ENCODE measurements at regions of chr11 and their contacts with region 1.

Region 1: GRCh38 chr11:60831143-60831500 is 10.8 kb upstream of the CCDC86 start:
- DNase-seq: peak; percentile 83
- H3K4me3 ChIP-seq: no peak overlapping the region
- H3K27ac ChIP-seq: no peak overlapping the region
- H3K4me1 ChIP-seq: peaks cover 21% of the 10 kb centered on the region
- H3K27me3 ChIP-seq: no peaks in the 10 kb centered on the region
- CTCF ChIP-seq: peak; percentile 89 to 90
- POLR2A ChIP-seq: no peak

Region 2: GRCh38 chr11:60748821-60749220 is 82.3 kb before region 1 on chr11:
- CTCF ChIA-PET with region 1: no interaction called
- POLR2A ChIA-PET with region 1: no interaction called
- dilution Hi-C with region 1: no loop called
- intact Hi-C with region 1: no loop called
- DNase-seq: no peak
- H3K4me3 ChIP-seq: no peak overlapping the region
- H3K27ac ChIP-seq: no peak overlapping the region
- H3K4me1 ChIP-seq: no peaks in the 10 kb centered on the region
- H3K27me3 ChIP-seq: peaks cover 5% of the 10 kb centered on the region in 2 experiments
- CTCF ChIP-seq: no peak
- POLR2A ChIP-seq: no peak

Region 3: DNA sequence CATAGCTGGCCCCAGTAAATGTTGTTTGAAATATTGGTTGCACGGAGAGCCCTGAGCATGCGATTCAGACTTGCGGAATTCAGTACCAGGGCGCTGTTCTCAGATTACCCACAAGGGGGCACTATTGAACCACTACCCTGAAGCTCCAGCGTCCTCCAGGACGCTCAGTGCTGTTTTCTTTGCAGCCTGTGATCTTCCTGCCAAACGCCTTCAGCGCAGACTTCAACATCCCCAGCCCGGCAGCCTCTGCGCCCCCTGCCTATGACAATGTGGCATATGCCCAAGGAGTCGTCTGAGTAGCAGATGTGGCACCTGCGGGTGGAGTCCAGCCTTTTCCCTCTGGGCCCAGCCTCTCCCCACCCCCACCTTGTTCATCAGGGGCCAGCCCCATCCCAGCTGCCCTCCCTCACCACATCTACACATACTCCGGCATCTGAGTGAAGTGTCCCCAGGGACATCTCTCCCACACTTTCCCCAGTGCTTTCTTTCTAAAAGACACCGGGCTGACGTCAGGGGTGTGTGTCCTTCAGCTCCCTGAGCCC is 55.6 kb before region 1 on chr11:
- CTCF ChIA-PET with region 1: interaction called, 78 read pairs
- POLR2A ChIA-PET with region 1: interaction called, 10 read pairs
- dilution Hi-C with region 1: no loop called
- intact Hi-C with region 1: loop called (anchors 1 kb)
- DNase-seq: peak; percentile 95
- H3K4me3 ChIP-seq: no peak overlapping the region
- H3K27ac ChIP-seq: peak overlapping the region; percentile 70
- H3K4me1 ChIP-seq: peaks cover 29% of the 10 kb centered on the region
- H3K27me3 ChIP-seq: no peaks in the 10 kb centered on the region
- CTCF ChIP-seq: peak; percentile 84 to 95
- POLR2A ChIP-seq: no peak

Region 4: GRCh38 chr11:60841797-60842667 is 10.9 kb after region 1 on chr11 and contains the start of gene CCDC86:
- CTCF ChIA-PET with region 1: interaction called, 28 read pairs
- POLR2A ChIA-PET with region 1: no interaction called
- dilution Hi-C with region 1: no loop called
- intact Hi-C with region 1: no loop called
- DNase-seq: peak; percentile 96
- H3K4me3 ChIP-seq: peak within 1 kb of the TSS; percentile 64 to 74 (median 73)
- H3K27ac ChIP-seq: peak within 1 kb of the TSS; percentile 65
- H3K4me1 ChIP-seq: peaks cover 37% of the 10 kb centered on the region
- H3K27me3 ChIP-seq: no peaks in the 10 kb centered on the region
- CTCF ChIP-seq: no peak
- POLR2A ChIP-seq: peak; percentile 59
- total RNA-seq, gene CCDC86: 57.6 and 60.8 TPM in 2 replicates

Region 5: DNA sequence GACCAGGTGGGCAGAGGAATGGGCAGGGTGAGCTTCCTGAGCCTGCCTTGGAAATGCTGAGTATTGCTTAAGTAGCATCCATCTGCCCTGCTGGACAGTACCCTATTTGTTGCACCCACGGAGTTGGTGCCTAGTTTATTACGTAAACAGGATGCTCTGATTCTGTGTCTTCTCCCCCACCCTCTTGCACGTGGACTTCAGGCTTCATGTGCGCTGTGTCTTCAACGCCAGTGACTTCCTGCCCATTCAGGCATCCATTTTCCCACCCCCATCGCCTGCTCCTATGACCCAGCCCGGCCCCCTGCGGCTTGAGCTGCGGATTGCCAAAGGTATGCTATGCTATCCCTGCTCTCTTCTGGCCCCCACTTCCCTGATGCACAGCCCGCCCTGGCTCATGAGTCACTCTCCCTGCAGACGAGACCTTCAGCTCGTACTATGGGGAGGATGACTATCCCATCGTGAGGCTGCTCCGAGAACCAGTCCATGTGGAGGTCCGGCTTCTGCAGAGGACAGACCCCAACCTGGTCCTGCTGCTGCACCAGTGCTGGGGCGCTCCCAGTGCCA is 41.9 kb after region 1 on chr11:
- CTCF ChIA-PET with region 1: interaction called, 12 read pairs
- POLR2A ChIA-PET with region 1: no interaction called
- dilution Hi-C with region 1: no loop called
- intact Hi-C with region 1: no loop called
- DNase-seq: no peak
- H3K4me3 ChIP-seq: no peak overlapping the region
- H3K27ac ChIP-seq: no peak overlapping the region
- H3K4me1 ChIP-seq: no peaks in the 10 kb centered on the region
- H3K27me3 ChIP-seq: no peaks in the 10 kb centered on the region
- CTCF ChIP-seq: no peak
- POLR2A ChIP-seq: no peak

Region 6: GRCh38 chr11:60899046-60899936 is 68.2 kb after region 1 on chr11:
- CTCF ChIA-PET with region 1: interaction called, 300 read pairs
- POLR2A ChIA-PET with region 1: interaction called, 4 read pairs
- dilution Hi-C with region 1: no loop called
- intact Hi-C with region 1: loop called (anchors 1 kb)
- DNase-seq: peak; percentile 81
- H3K4me3 ChIP-seq: no peak overlapping the region
- H3K27ac ChIP-seq: peak overlapping the region; percentile 1
- H3K4me1 ChIP-seq: peaks cover 2% of the 10 kb centered on the region
- H3K27me3 ChIP-seq: no peaks in the 10 kb centered on the region
- CTCF ChIP-seq: peak; percentile 85 to 94
- POLR2A ChIP-seq: no peak

Region 7: GRCh38 chr11:61129639-61130523 is 298.8 kb after region 1 on chr11:
- CTCF ChIA-PET with region 1: interaction called, 22 read pairs
- POLR2A ChIA-PET with region 1: no interaction called
- dilution Hi-C with region 1: no loop called
- intact Hi-C with region 1: loop called (anchors 1 kb)
- DNase-seq: peak; percentile 93
- H3K4me3 ChIP-seq: no peak overlapping the region
- H3K27ac ChIP-seq: peak overlapping the region; percentile 2
- H3K4me1 ChIP-seq: peaks cover 3% of the 10 kb centered on the region
- H3K27me3 ChIP-seq: peaks cover 9 to 10% of the 10 kb centered on the region in 2 experiments
- CTCF ChIP-seq: peak; percentile 100
- POLR2A ChIP-seq: no peak